ENCODE measurements at regions of chr6 and their contacts with region 1.

Region 1: GRCh38 chr6:37207903-37208456 is 38.0 kb downstream of the PIM1 start:
- DNase-seq: peak; percentile 95
- H3K4me3 Mint-ChIP-seq: no peak overlapping the region
- H3K27ac Mint-ChIP-seq: no peak overlapping the region
- H3K4me1 Mint-ChIP-seq: peaks cover 28% of the 10 kb centered on the region
- H3K27me3 Mint-ChIP-seq: no peaks in the 10 kb centered on the region
- CTCF ChIP-seq: peak; percentile 89

Region 2: DNA sequence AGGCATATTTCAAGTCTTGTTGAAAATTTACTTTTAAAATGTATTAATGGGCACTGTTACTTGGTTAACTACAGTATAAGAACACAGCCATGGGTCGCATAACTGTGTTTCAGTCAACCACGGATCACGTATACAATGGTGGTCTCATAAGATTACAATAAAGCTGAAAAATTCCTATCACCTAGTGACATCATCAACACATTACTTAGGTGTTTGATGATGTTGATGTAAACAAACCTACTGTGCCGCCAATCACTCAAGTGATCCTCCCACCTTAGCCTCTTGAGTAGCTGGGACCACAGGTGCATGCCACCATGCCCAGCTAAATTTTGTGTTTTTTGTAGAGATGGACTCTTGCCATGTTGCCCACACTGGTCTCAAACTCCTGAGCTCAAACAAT is 803.8 kb before region 1 on chr6:
- CTCF ChIA-PET with region 1: no interaction called
- intact Hi-C with region 1: no loop called
- DNase-seq: no peak
- H3K4me3 Mint-ChIP-seq: no peak overlapping the region
- H3K27ac Mint-ChIP-seq: no peak overlapping the region
- H3K4me1 Mint-ChIP-seq: no peaks in the 10 kb centered on the region
- H3K27me3 Mint-ChIP-seq: peaks cover 22% of the 10 kb centered on the region
- CTCF ChIP-seq: no peak

Region 3: DNA sequence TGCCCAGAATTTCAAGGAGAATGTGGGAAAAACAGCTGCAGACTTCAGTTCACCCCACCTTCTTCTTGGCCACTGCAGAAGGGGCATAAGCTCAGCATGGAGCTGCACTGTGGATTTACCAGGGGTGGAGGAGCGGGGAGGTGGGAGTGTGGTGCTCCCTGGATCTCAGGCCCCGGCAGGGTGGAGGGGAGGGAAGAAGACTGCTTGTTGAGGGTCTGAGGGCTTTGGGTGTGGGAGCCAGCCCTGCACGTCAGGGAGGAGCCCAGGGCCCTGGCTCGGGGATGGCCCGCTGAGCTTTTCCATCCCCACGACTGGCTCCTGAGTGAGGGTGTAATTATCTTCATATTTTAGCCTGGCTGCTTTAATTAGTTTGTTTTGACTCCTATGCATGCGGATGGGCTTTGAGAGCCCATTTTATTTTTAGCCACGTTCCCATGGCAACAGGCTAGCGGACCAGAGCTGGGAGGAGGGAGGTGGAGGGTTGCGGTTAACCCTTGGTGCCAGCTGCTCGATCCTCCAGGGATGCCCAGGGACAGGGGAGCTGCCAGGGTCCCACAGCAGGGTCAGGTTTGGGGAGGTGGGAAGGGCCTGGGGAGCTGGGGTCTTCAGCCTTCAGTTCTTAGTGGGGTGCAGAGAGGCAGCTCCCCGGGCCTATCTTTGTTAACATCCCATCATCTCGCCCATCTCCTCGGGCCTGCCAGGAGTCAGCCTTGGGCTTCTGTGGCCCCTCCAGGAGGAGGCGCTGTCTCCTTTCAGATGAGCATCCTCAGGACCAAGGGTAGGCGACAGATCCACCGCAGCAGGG is 442.2 kb before region 1 on chr6:
- CTCF ChIA-PET with region 1: interaction called, 5 read pairs
- intact Hi-C with region 1: loop called (anchors 2 kb)
- DNase-seq: peak; percentile 92
- H3K4me3 Mint-ChIP-seq: no peak overlapping the region
- H3K27ac Mint-ChIP-seq: no peak overlapping the region
- H3K4me1 Mint-ChIP-seq: peaks cover 24% of the 10 kb centered on the region
- H3K27me3 Mint-ChIP-seq: no peaks in the 10 kb centered on the region
- CTCF ChIP-seq: peak; percentile 95

Region 4: GRCh38 chr6:36959555-36960250 is 248.3 kb before region 1 on chr6:
- CTCF ChIA-PET with region 1: interaction called, 12 read pairs
- intact Hi-C with region 1: no loop called
- DNase-seq: no peak
- H3K4me3 Mint-ChIP-seq: no peak overlapping the region
- H3K27ac Mint-ChIP-seq: no peak overlapping the region
- H3K4me1 Mint-ChIP-seq: peaks cover 54% of the 10 kb centered on the region
- H3K27me3 Mint-ChIP-seq: no peaks in the 10 kb centered on the region
- CTCF ChIP-seq: no peak

Region 5: DNA sequence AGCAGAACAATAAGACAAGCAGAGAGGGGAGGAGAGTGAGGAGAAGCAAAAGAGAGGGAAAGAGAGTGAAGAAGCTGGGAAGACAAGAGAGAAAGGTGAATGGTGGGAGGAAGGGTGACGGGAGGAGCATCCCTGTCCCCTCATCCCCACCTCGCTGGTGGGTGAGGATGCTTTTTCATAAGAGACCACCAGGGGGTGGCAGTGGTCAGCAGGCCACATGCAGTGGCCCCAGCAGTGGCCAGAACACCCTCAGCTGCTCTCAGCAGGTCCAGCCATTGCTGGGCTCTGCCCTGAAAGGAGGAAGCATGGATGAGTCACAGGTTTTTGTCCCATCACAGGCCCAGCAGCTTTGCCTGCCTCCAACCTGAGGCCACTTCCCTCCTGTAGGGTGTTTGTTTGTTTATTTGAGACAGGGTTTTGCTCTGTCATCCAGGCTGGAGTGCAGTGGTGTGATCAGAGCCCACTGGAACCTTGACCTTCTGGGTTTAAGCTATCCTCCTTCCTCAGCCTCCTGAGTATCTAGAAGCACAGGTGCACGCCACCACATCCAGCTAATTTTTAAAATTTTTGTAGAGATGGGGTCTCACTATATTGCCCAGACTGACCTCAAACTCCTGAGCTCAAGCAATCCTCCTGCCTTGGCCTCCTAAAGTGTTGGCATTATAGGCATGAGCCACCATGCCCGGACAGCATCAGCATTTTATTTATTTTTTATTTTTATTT is 178.6 kb before region 1 on chr6:
- CTCF ChIA-PET with region 1: interaction called, 185 read pairs
- intact Hi-C with region 1: no loop called
- DNase-seq: peak; percentile 89
- H3K4me3 Mint-ChIP-seq: no peak overlapping the region
- H3K27ac Mint-ChIP-seq: peak overlapping the region; percentile 11
- H3K4me1 Mint-ChIP-seq: peaks cover 29% of the 10 kb centered on the region
- H3K27me3 Mint-ChIP-seq: no peaks in the 10 kb centered on the region
- CTCF ChIP-seq: peak; percentile 72

Region 6: GRCh38 chr6:37051138-37052026 is 156.6 kb before region 1 on chr6:
- CTCF ChIA-PET with region 1: interaction called, 18 read pairs
- intact Hi-C with region 1: no loop called
- DNase-seq: peak; percentile 95
- H3K4me3 Mint-ChIP-seq: no peak overlapping the region
- H3K27ac Mint-ChIP-seq: no peak overlapping the region
- H3K4me1 Mint-ChIP-seq: peaks cover 47% of the 10 kb centered on the region
- H3K27me3 Mint-ChIP-seq: no peaks in the 10 kb centered on the region
- CTCF ChIP-seq: peak; percentile 92

Region 7: GRCh38 chr6:37102279-37103168 is 105.5 kb before region 1 on chr6:
- CTCF ChIA-PET with region 1: no interaction called
- intact Hi-C with region 1: loop called (anchors 5 kb)
- DNase-seq: peak; percentile 75
- H3K4me3 Mint-ChIP-seq: peak overlapping the region; percentile 67
- H3K27ac Mint-ChIP-seq: peak overlapping the region; percentile 81
- H3K4me1 Mint-ChIP-seq: peaks cover 45% of the 10 kb centered on the region
- H3K27me3 Mint-ChIP-seq: no peaks in the 10 kb centered on the region
- CTCF ChIP-seq: no peak